Head of caudate nucleus (tissue), 42 donors: ENCODE measurements at regions of chr18 and their contacts with region 1.

Region 1: DNA sequence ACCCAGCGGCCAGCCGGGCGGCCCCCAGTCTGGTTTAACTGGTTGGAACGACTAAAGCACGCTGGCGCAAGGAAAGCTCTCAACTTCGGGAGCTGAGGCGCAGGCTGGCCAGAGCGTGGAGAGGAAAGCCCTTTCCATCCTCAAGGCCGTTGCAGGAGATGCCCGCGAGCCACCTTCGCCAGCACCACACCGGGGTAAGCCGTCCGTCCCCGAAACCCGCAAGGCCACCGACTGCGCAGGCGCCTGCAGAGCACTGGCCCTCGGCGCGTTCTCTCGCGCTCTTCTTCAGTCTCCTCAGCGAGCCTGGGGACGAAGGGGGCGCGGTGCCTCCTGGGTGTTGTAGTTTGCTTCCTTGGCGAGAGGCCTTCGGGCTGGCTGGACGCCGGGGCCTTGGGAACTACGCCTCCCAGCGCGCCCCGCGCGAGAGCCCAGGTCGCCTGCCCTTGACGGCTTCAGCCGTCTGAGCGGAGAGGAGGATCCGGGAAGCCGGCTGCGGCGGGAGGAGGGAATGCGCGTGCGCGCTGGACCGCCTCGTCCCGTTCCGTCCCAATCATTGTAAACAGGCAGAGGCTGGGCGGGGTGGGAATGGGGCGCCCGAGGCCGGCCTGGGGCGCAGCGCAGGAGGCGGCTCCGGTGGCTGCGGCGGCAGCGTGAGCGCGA is at the start of gene RALBP1:
- DNase-seq: peak; percentile 98 to 100 (median 100)

Region 2: GRCh38 chr18:9184998-9185613 is 290.0 kb before region 1 on chr18:
- intact Hi-C with region 1: no loop called
- DNase-seq: no peak

Region 3: DNA sequence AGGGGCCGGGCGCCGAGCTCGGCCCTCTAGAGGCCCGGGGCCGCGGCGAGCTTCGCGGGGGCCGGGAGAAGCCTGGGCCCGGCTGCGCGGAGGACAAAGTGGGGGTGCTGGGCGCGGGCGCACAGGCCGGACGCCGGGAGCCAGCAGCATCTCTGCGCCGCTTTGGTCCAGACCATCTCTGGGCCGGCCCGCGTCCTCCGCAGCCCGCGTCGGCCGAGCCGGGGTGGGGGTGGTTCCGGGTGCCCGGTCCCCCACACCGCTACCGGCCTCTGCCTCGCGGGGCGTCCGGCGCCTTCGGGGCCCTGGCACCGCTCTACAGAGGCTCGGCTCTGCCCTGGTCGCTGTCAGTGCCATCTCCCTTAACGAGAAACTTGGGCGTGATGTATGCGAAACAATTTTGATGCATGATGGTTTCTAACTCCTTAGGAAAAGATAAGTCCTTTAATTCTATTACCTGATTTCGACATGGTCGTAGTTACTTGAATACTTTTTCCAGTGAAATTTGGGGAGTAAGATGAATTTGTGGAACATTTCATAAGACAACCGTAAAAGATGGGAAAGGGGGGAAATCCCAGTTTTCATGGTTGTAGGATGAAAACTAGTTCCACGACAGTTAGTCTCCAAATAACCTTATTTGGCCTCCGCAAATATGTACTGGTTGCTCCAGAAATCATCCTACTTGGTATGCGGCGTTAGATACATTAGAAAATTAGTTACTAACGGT is 140.0 kb before region 1 on chr18:
- intact Hi-C with region 1: loop called (anchors 5 kb)
- DNase-seq: peak in 37 of 42 donors; percentile 14 to 71 (median 45)